MCF 10A (cell line): ENCODE measurements at regions of chr10 and their contacts with region 1.

Region 1: DNA sequence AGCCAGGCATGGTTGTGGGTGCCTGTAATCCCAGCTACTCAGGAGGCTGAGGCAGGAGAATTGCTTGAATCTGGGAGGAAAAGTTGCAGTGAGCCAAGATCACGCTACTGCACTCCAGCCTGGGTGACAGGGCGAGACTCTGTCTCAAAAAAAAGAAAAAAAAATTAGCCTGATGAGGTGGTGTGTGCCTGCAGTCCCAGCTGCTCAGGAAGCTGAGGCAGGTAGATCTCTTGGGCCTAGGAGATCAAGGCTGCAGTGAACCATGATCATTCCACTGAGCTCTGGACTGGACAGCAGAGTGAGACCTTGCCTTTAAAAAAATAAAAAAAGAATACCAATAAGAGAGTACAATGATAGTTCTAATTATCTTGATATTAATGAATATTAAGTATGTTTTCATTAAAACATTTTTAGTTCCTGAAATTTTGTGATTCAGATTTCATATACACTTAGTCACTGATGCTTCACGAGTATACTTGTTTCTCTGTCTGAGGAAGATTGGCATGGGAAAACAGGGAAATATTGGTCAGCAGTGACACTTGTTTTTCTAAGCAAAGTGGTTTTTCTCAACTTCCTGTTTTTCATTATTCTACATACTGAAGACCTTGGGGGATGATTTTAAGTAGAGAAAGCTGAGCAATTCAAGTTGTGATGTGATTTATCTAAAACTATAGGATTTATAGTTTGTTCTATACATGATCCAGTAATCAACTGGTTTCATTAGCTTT is 76.8 kb downstream of the ADK start:
- DNase-seq: peak; percentile 65
- H3K4me3 Mint-ChIP-seq: no peak overlapping the region
- H3K27ac Mint-ChIP-seq: peak overlapping the region; percentile 89
- H3K4me1 Mint-ChIP-seq: peaks cover 27% of the 10 kb centered on the region
- H3K27me3 Mint-ChIP-seq: no peaks in the 10 kb centered on the region
- CTCF ChIP-seq: no peak

Region 2: DNA sequence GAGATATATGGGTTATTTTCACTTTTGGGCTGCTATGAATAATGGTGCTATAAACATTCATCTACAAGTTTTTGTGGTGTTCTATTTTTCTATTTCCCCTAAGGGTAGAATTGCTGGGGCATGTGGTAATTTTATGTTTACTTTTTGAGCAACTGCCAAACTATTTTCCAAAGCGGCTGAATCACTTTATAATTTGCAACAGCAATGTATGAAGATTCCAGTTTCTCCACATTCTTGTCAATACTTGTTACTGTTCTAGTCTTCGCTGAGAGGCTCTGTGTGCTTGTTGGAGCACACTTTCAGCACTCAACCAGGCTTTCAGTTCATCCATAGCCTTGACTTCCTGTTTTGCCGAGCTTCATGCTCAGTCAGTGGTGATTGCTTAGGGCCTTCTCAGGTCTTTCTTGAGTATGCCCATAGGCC is 37.9 kb before region 1 on chr10:
- CTCF ChIA-PET with region 1: interaction called, 3 read pairs
- POLR2A ChIA-PET with region 1: interaction called, 23 read pairs
- intact Hi-C with region 1: loop called (anchors 1 kb)
- DNase-seq: peak; percentile 94
- H3K4me3 Mint-ChIP-seq: peak overlapping the region; percentile 66
- H3K27ac Mint-ChIP-seq: peak overlapping the region; percentile 91
- H3K4me1 Mint-ChIP-seq: peaks cover 43% of the 10 kb centered on the region
- H3K27me3 Mint-ChIP-seq: no peaks in the 10 kb centered on the region
- CTCF ChIP-seq: no peak

Region 3: DNA sequence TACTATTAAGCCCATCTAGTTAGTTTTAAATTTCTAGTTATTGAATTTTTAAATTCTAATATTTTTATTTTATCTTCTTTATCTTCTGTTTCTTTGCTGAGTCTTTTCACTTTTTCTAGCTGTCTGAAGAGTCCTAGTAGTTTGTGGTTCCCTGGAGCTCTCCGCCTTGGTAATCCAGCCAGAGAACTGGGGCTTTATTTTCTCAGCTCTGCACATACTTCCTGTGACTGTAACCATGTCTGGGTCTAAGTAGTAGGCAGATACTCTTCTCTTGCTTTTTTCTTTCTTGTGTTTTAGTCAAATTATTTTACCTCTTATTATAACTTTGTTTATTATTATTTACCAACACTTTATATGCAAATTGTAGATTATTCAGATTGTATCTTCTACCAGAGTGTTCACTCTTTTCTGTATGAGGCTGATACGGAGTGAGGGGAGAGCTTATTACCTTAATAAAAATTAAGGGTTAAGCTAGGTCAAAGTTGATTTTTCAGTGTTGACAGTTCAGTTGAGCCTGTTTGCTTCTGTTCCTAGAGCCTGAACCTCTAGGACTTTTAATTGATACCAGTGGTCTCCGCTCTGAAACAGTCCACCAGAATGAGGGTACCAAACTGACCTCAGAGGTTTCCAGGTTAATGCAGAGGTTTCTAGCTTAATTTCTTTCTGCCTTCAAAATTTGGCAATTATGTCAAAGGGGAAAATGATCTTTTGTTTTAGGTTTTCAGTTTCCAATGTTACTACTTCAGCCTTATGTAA is 78.5 kb after region 1 on chr10:
- CTCF ChIA-PET with region 1: no interaction called
- POLR2A ChIA-PET with region 1: no interaction called
- intact Hi-C with region 1: no loop called
- DNase-seq: no peak
- H3K4me3 Mint-ChIP-seq: no peak overlapping the region
- H3K27ac Mint-ChIP-seq: peak overlapping the region; percentile 25
- H3K4me1 Mint-ChIP-seq: peaks cover 27% of the 10 kb centered on the region
- H3K27me3 Mint-ChIP-seq: no peaks in the 10 kb centered on the region
- CTCF ChIP-seq: no peak